Endothelial cell of umbilical vein (primary cell): ENCODE measurements at regions of chr2 and their contacts with region 1.

Region 1: GRCh38 chr2:174059178-174059874 is 94.2 kb upstream of the SP3 start:
- DNase-seq: peak; percentile 96
- H3K4me3 ChIP-seq: no peak overlapping the region
- H3K27ac ChIP-seq: peak overlapping the region; percentile 65
- H3K4me1 ChIP-seq: peaks cover 15% of the 10 kb centered on the region
- H3K27me3 ChIP-seq: peaks cover 0 to 2% of the 10 kb centered on the region in 2 experiments
- CTCF ChIP-seq: no peak
- POLR2A ChIP-seq: no peak

Region 2: GRCh38 chr2:174039551-174040416 is 19.5 kb before region 1 on chr2:
- CTCF ChIA-PET with region 1: no interaction called
- POLR2A ChIA-PET with region 1: no interaction called
- dilution Hi-C with region 1: no loop called
- intact Hi-C with region 1: loop called (anchors 1 kb)
- DNase-seq: peak; percentile 97
- H3K4me3 ChIP-seq: no peak overlapping the region
- H3K27ac ChIP-seq: peak overlapping the region; percentile 67
- H3K4me1 ChIP-seq: peaks cover 16% of the 10 kb centered on the region
- H3K27me3 ChIP-seq: no peaks in the 10 kb centered on the region
- CTCF ChIP-seq: peak; percentile 86 to 93
- POLR2A ChIP-seq: no peak

Region 3: GRCh38 chr2:174094542-174094941 is 35.2 kb after region 1 on chr2:
- CTCF ChIA-PET with region 1: no interaction called
- POLR2A ChIA-PET with region 1: no interaction called
- dilution Hi-C with region 1: no loop called
- intact Hi-C with region 1: no loop called
- DNase-seq: no peak
- H3K4me3 ChIP-seq: no peak overlapping the region
- H3K27ac ChIP-seq: no peak overlapping the region
- H3K4me1 ChIP-seq: no peaks in the 10 kb centered on the region
- H3K27me3 ChIP-seq: no peaks in the 10 kb centered on the region
- CTCF ChIP-seq: no peak
- POLR2A ChIP-seq: no peak